OCI-LY7 (cell line): ENCODE measurements at regions of chr16 and their contacts with region 1.

Region 1: DNA sequence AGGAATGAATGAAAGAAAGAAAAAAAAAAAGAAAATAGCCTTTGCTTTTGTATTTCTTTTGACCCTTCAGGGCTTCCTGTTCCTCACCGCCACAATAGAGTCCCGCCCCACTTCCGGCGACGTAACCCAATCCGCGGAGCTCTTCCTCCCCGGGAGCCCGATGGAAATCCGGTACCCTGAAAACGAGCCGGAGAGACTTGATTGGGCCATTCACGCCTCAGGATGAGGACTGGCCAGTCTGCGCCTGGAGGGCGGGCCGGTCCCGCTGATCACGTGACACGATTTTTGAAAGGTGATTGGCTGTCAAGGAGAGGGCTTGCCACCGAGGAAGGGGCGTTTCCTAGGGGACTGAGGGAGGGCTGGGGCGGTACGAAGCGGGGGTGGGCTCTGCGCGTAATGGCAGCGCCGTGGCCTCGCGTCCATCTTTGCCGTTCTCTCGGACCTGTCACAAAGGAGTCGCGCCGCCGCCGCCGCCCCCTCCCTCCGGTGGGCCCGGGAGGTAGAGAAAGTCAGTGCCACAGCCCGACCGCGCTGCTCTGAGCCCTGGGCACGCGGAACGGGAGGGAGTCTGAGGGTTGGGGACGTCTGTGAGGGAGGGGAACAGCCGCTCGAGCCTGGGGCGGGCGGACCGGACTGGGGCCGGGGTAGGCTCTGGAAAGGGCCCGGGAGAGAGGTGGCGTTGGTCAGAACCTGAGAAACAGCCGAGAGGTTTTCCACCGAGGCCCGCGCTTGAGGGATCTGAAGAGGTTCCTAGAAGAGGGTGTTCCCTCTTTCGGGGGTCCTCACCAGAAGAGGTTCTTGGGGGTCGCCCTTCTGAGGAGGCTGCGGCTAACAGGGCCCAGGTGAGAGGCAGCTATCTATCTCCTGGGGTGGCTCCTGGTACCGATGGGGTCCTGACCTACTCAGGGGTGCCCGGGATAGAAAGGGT is at the starts of genes PSME3IP1 and RSPRY1:
- DNase-seq: peak; percentile 99
- H3K4me3 ChIP-seq: peak within 1 kb of the TSS; percentile 87
- H3K27ac ChIP-seq: peak within 1 kb of the TSS; percentile 60
- H3K4me1 ChIP-seq: peaks cover 30% of the 10 kb centered on the region
- CTCF ChIP-seq: no peak
- total RNA-seq, gene PSME3IP1: 89.5 and 111 TPM in 2 replicates
- total RNA-seq, gene RSPRY1: 17.1 and 25.6 TPM in 2 replicates

Region 2: DNA sequence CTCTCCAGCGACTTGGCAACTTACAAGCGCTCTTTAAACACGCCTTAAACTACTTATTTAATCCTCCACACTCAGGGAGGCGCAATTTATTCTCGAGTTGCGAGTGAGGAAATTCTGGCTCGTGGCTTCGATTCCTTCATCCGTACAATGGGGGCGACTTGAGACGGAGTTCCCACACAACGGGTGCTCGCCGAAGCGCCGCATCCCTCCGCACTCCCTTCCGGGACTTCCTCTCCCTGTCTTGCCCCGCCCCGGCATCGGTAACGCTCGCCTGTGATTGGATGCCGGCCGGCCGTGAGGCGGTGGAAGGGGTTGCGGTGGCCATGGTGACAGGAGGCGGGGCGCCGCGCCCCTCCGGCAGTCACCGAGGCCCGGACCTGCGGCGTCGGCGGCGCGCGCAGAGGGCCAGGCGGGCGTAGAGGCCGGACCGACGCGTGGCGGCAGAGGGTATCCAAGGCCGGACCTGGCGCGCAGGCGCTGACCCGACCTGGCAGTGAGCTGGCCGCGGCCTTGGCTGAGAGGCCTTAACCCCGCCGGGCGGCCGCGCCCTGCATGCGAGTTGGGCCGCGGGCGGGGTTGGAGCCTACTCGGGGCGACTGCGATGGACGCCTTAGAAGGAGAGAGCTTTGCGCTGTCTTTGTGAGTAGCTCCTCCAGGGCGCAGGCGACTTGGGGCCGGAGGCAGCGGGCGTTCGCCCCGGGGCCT is 58.7 kb after region 1 on chr16 and contains the start of gene ARL2BP:
- CTCF ChIA-PET with region 1: no interaction called
- POLR2A ChIA-PET with region 1: interaction called, 6 read pairs
- intact Hi-C with region 1: loop called (anchors 5 kb)
- DNase-seq: peak; percentile 95
- H3K4me3 ChIP-seq: peak within 1 kb of the TSS; percentile 85
- H3K27ac ChIP-seq: peak within 1 kb of the TSS; percentile 60
- H3K4me1 ChIP-seq: peaks cover 31% of the 10 kb centered on the region
- CTCF ChIP-seq: peak; percentile 59; the same call in 1 of the 2 replicates
- total RNA-seq, gene ARL2BP: 25.4 and 26.6 TPM in 2 replicates

Region 3: DNA sequence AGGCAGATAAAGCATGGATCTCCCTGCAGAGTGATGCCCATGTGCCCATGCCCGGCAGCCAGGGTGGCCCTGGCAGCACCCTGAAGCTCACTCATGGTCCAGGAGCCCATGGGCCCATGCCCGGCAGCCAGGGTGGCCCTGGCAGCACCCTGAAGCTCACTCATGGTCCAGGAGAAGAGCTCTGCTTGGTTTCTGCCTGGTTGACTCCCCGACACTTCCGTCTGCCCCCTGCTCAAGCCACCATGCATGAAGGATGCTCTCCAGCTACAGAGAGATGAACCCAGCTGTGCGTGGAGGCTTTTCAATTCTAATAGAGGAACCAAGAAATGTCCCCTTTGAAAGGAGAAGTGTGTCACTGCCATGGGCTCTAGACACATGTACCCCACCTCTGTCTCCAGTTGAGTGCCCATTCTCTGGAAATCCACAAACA is 227.1 kb after region 1 on chr16:
- CTCF ChIA-PET with region 1: no interaction called
- POLR2A ChIA-PET with region 1: no interaction called
- intact Hi-C with region 1: loop called (anchors 10 kb)
- DNase-seq: peak; percentile 94
- H3K4me3 ChIP-seq: peak overlapping the region; percentile 0
- H3K27ac ChIP-seq: peak overlapping the region; percentile 69
- H3K4me1 ChIP-seq: peaks cover 31% of the 10 kb centered on the region
- CTCF ChIP-seq: no peak